ENCODE measurements at regions of chrX and their contacts with region 1.

Region 1: DNA sequence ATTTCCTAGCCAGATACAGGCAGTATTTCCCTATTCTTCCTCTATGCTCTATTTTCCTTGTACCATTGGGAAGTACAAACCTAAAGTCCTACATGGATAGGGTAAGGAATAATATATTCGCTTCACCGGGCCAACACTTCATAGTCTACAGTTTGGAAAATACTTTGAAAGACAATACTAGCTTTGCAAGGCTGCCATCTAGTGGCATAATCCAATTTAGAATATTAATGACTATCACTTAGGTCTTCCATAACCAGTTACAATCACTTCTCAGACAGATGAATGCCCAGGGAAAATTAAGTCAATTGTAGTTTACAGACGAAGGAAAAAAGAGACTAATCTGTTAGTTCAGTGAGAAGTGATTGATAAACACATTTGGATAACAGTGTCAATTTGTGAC is 141.0 kb upstream of the FAM47C start:
- DNase-seq: no peak
- ATAC-seq: peak in 1 of 4 donors; percentile 33
- H3K4me3 ChIP-seq: no peak overlapping the region
- H3K27ac ChIP-seq: no peak overlapping the region
- H3K4me1 ChIP-seq: no peaks in the 10 kb centered on the region
- H3K27me3 ChIP-seq: peaks cover 0 to 12% (median 0%) of the 10 kb centered on the region in 9 donors
- CTCF ChIP-seq: peak; percentile 30 to 66 (median 52)
- POLR2A ChIP-seq: no peak

Region 2: GRCh38 chrX:35890699-35891098 is 976.4 kb before region 1 on chrX:
- intact Hi-C with region 1: loop called in 3 of 10 experiments (anchors 5 to 10 kb)
- DNase-seq: peak in 1 of 5 donors; percentile 6
- ATAC-seq: no peak
- H3K4me3 ChIP-seq: no peak overlapping the region
- H3K27ac ChIP-seq: no peak overlapping the region
- H3K4me1 ChIP-seq: no peaks in the 10 kb centered on the region
- H3K27me3 ChIP-seq: peaks cover 0 to 6% (median 0%) of the 10 kb centered on the region in 9 donors
- CTCF ChIP-seq: peak in 11 of 12 donors; percentile 27 to 60 (median 49)
- POLR2A ChIP-seq: no peak

Region 3: GRCh38 chrX:37434362-37434761 is 567.2 kb after region 1 on chrX:
- intact Hi-C with region 1: no loop called
- DNase-seq: no peak
- ATAC-seq: no peak
- H3K4me3 ChIP-seq: no peak overlapping the region
- H3K27ac ChIP-seq: no peak overlapping the region
- H3K4me1 ChIP-seq: no peaks in the 10 kb centered on the region
- H3K27me3 ChIP-seq: no peaks in the 10 kb centered on the region
- CTCF ChIP-seq: no peak
- POLR2A ChIP-seq: no peak

Measured in heart left ventricle (tissue), 16 donors.